ENCODE measurements at regions of chr19 and their contacts with region 1.

Region 1: DNA sequence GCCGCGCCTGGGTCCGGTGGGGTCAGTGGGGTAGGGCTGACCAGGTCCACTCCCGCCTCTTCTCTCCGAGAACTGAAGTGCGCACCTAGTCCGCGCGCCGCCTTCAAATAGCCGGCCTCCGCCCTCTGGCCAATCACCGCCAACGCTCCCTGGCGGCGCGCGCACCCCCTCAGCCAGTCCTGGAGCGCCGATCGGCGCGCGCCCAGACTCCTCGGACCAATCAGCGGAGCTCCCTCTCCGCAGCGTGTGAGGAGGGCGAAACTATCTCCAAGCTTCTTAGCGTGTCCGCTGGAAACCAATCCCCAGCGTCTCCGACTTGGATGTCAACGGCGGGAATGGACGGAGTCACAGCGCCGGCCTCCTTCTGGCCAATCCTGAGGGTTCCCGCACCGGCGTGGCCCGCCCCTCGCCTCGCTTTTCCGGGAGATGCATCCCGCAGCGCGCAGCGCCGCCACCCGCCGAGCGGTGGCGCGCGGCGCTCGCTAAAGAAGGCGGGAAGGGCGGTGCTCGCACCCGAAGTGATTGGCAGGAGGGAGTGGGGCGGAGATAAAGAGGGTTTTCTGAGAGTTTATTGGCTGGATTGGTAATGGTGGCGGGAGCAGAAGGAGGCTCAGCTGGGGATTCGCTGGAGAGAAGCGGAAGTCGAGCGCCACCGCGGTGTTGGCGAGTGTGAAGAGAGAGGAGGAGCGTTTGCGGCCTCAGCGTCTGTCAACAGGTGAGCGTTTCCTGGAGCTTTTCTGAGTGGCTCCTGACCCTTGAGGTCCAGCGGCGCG is at the start of gene ASF1B:
- DNase-seq: peak; percentile 100
- H3K4me3 ChIP-seq: peak within 1 kb of the TSS; percentile 79
- H3K27ac ChIP-seq: peak within 1 kb of the TSS; percentile 87
- H3K27me3 ChIP-seq: no peaks in the 10 kb centered on the region
- CTCF ChIP-seq: peak; percentile 73
- polyA plus RNA-seq, gene ASF1B: 2.8 and 2.9 TPM in 2 replicates

Region 2: GRCh38 chr19:14122924-14123323 is 13.8 kb before region 1 on chr19:
- CTCF ChIA-PET with region 1: interaction called, 36 read pairs
- POLR2A ChIA-PET with region 1: interaction called, 9 read pairs
- DNase-seq: no peak
- H3K4me3 ChIP-seq: no peak overlapping the region
- H3K27ac ChIP-seq: no peak overlapping the region
- H3K27me3 ChIP-seq: no peaks in the 10 kb centered on the region
- CTCF ChIP-seq: no peak

Region 3: GRCh38 chr19:14183741-14184350 is 47.2 kb after region 1 on chr19:
- CTCF ChIA-PET with region 1: no interaction called
- POLR2A ChIA-PET with region 1: no interaction called
- DNase-seq: no peak
- H3K4me3 ChIP-seq: no peak overlapping the region
- H3K27ac ChIP-seq: no peak overlapping the region
- H3K27me3 ChIP-seq: no peaks in the 10 kb centered on the region
- CTCF ChIP-seq: no peak

Region 4: GRCh38 chr19:14248578-14249011 is 111.9 kb after region 1 on chr19:
- CTCF ChIA-PET with region 1: no interaction called
- POLR2A ChIA-PET with region 1: no interaction called
- DNase-seq: no peak
- H3K4me3 ChIP-seq: peak overlapping the region; percentile 48
- H3K27ac ChIP-seq: no peak overlapping the region
- H3K27me3 ChIP-seq: peaks cover 19% of the 10 kb centered on the region
- CTCF ChIP-seq: no peak

Region 5: DNA sequence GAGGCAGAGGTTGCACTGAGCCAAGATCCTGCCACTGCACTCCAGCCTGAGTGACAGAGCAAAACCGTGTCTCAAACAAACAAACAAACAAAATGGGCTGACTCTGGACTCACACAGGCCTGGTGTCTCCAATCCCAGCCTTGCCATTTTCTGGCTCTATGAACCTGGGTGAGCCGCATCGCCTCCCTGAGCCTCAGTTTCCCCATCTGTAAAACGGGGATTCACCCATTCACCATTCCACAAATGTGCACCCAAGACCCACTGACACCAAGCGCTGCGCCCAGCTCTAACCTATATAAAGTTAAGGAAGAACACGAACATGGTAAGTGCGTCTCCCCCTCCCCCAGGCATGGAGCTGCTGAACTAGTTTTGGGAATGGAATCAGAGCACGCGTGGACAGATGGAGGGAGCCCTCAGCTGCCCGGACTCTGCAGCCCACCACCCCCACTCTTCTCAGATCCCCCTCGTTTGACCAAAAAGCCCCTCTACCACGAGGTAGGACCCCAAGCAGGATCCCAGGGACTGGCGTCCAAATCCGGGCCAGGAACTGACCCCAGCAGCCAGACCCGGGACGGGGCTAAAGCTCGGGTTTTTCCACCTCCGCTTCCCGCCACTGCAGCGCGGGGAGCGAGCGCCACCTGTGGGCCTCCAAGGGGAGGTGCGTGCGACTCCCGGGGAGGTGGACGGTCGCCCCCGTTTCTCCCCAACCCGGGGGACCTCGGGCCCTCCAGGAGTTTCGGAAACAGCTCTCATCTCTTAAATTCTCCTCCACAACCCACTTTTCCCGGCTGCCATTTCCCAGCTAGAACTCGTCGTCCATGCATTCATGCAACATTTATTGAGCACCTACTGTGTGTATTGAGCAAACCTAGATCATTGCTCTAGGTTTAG is 211.5 kb after region 1 on chr19:
- CTCF ChIA-PET with region 1: interaction called, 41 read pairs
- POLR2A ChIA-PET with region 1: interaction called, 5 read pairs
- DNase-seq: no peak
- H3K4me3 ChIP-seq: peak overlapping the region; percentile 46
- H3K27ac ChIP-seq: no peak overlapping the region
- H3K27me3 ChIP-seq: peaks cover 28% of the 10 kb centered on the region
- CTCF ChIP-seq: peak; percentile 99

Region 6: GRCh38 chr19:14405758-14406644 is 269.3 kb after region 1 on chr19:
- CTCF ChIA-PET with region 1: interaction called, 12 read pairs
- POLR2A ChIA-PET with region 1: no interaction called
- DNase-seq: no peak
- H3K4me3 ChIP-seq: no peak overlapping the region
- H3K27ac ChIP-seq: no peak overlapping the region
- H3K27me3 ChIP-seq: no peaks in the 10 kb centered on the region
- CTCF ChIP-seq: peak; percentile 61

Region 7: GRCh38 chr19:14479975-14480699 is 343.4 kb after region 1 on chr19:
- CTCF ChIA-PET with region 1: interaction called, 17 read pairs
- POLR2A ChIA-PET with region 1: no interaction called
- DNase-seq: no peak
- H3K4me3 ChIP-seq: no peak overlapping the region
- H3K27ac ChIP-seq: peak overlapping the region; percentile 61
- H3K27me3 ChIP-seq: no peaks in the 10 kb centered on the region
- CTCF ChIP-seq: peak; percentile 82

Measured in AG04450 (cell line).